Activated naive CD4-positive, alpha-beta T cell treated with anti-CD3 and anti-CD28 coated beads, Interleukin-2, amount 10 ng/mL, durations not matched to agents 7 days and 5 days (primary cell): ENCODE measurements at regions of chr3 and their contacts with region 1.

Region 1: DNA sequence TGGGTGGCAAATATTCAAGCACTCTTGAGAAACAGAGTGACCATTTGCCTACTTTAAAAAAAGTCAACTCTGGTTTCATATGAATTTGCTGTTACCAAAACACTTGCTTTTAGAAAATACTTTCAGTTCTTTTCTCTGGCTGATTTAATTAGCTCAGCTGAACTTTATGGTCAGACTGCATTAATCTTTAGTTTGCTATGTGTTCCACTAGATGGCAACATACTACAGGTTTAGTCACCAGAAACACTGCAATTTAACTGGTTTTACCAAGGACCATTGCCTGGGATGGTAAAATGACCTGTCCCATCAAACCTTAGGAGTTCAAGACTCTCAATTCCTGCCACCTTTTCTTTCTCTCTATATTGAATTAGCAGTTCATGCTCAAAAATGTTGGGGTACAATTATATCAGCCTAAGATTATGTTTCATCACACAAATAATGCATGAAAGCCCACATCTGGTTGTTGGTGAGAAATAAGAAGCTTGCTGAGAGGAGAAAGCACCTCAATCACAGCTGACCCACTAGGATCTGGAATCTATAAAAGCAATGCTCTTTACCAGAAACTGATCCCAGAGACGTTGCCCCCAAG is 14.2 kb downstream of the EIF4E3 start:
- DNase-seq: no peak
- H3K4me3 Mint-ChIP-seq: no peak overlapping the region
- H3K27ac Mint-ChIP-seq: no peak overlapping the region
- H3K4me1 Mint-ChIP-seq: peaks cover 64% of the 10 kb centered on the region
- H3K27me3 Mint-ChIP-seq: no peaks in the 10 kb centered on the region

Region 2: DNA sequence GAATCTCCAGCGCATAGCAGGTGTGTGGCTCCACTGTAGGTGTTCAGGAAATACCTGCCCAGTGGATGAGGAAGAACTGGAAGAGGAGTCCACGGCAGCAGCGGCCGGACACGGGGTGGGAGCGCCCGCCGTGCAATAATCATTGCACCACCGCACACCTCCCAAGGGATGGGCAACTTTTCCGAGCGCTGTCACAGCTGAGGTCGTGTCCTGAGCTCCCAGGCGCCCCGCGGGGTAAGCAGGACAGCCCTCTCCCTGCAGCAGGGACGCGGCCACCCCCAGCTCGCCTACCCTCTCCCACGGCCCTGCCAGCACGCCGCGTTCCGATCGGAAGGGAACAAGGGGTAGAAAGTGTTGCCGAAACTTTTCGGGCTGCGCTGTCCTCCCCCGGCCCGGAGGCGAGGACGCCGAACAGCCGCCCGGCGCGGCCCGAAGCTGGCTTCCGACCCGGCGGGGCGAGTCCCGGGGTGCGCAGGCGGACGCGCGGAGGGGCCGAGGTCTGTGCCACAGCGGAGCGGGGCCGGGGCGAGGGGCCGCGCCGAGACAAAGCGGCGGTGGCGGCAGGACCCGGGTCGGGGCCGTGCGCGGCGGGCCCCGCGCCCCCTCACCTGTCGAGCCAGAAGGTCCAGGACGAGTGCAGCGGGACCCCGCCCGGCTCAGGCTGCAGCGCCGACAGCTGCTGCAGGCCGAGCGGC is 13.7 kb after region 1 on chr3:
- CTCF ChIA-PET with region 1: interaction called, 39 read pairs
- DNase-seq: peak; percentile 52
- H3K4me3 Mint-ChIP-seq: peak overlapping the region; percentile 94
- H3K27ac Mint-ChIP-seq: peak overlapping the region; percentile 88
- H3K4me1 Mint-ChIP-seq: peaks cover 68% of the 10 kb centered on the region
- H3K27me3 Mint-ChIP-seq: no peaks in the 10 kb centered on the region

Region 3: GRCh38 chr3:71859123-71859519 is 148.1 kb after region 1 on chr3:
- CTCF ChIA-PET with region 1: interaction called, 34 read pairs
- DNase-seq: peak; percentile 33
- H3K4me3 Mint-ChIP-seq: no peak overlapping the region
- H3K27ac Mint-ChIP-seq: no peak overlapping the region
- H3K4me1 Mint-ChIP-seq: peaks cover 8% of the 10 kb centered on the region
- H3K27me3 Mint-ChIP-seq: peaks cover 12% of the 10 kb centered on the region

Region 4: DNA sequence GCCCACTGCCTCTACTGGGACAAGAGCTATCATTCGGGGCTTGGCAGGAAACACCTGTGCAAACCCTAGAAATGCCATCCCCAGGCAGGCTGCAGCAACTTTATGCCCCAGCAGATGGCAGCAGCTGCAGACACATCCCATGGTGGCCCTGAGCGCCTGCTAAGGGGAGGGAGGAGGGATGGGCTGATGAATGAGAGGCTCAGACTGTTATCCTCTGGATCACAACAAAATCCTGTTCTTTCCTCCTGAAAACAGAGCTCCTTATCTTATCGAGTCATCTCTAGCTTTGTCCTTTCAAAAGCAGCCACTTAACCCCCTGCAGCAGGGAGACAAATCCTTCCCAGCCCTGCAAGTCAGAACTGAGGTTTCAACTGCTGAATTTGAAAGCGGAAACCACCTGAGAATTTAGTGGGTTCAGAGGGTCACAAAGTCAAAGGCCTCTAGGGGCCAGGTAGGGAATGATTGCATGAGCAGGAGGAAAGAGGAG is 164.5 kb after region 1 on chr3:
- CTCF ChIA-PET with region 1: interaction called, 12 read pairs
- DNase-seq: peak; percentile 85
- H3K4me3 Mint-ChIP-seq: no peak overlapping the region
- H3K27ac Mint-ChIP-seq: no peak overlapping the region
- H3K4me1 Mint-ChIP-seq: peaks cover 21% of the 10 kb centered on the region
- H3K27me3 Mint-ChIP-seq: no peaks in the 10 kb centered on the region

Region 5: DNA sequence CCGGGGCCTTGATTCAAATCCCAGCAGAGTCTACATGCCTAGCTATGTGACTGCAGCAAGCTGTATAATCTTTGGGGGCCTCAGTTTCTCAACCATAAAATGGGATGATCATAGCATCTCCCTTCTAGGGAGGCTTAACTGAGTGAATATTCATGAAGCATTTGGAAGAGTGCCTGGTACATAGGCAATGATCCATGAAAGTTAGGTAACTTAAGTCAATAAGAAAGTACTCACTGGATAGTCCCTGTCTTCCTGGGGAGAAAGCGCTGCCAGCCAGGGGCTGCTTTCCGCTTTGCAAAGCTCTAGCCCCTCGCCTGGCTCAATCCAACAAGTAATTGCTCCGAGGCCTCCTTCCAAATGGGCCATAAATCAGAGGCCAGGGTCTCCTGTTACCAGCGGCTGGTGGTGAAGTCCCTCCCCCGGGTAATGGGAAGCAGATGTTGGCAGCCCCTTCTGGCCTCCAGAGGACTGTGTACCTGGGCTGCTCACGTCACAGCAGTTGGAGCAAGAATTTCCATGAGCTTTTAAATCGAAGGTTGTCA is 595.9 kb after region 1 on chr3:
- CTCF ChIA-PET with region 1: no interaction called
- DNase-seq: no peak
- H3K4me3 Mint-ChIP-seq: no peak overlapping the region
- H3K27ac Mint-ChIP-seq: no peak overlapping the region
- H3K4me1 Mint-ChIP-seq: peaks cover 25% of the 10 kb centered on the region
- H3K27me3 Mint-ChIP-seq: peaks cover 5% of the 10 kb centered on the region